ENCODE measurements at regions of chr5 and their contacts with region 1.

Region 1: DNA sequence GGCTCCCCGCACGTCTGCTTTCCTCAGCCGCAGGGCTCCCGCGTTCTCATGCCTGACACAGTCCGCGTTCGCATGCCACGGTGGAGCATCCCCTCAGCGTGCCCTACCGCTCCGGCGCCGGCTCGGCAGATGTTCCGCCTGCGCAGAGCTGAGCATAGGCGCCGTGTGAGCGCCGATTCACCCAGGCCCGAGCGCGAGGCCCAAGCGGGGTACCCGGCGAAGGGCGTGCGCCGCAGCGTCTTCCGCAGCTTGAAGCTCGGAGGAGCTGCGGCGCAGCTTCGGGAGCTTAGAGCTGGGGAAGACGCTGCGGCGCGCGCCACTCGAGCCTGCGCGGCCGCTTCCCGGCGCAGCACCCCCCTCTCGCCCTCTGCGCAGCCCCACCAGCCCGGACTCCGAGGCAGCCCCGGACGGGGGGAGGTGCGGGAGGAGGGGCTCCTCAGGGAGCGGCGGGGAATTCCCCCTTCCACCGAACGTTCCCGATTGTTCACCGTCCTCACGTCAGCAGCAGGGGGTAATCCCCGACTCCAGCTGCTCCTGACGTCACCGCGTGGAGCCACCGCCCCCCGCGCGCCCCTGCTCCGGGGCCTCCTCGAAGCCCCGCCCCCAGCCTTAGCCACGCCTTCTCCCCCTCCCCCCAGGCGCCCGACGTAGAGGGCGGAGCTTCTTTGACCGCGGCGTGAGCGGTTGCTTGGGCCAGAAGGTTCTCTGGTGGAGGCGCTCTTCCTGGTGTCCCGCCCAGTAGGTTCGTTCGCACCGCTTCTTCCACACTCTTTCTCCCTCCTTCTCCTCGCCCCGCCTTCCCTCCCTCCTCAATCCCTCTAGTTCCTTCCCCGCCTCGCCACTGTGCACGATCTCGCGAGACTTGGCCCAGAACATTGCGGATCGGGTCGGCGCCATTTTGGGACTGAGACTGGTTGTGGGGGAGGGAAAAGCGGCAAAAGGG is at the start of gene GPBP1:
- DNase-seq: peak; percentile 99 to 100
- H3K4me3 ChIP-seq: peak within 1 kb of the TSS; percentile 99
- CTCF ChIP-seq: no peak
- POLR2A ChIP-seq: peak in 1 of 2 donors; percentile 12
- total RNA-seq, gene GPBP1: 40.1 to 58.6 (median 52.7) TPM

Region 2: DNA sequence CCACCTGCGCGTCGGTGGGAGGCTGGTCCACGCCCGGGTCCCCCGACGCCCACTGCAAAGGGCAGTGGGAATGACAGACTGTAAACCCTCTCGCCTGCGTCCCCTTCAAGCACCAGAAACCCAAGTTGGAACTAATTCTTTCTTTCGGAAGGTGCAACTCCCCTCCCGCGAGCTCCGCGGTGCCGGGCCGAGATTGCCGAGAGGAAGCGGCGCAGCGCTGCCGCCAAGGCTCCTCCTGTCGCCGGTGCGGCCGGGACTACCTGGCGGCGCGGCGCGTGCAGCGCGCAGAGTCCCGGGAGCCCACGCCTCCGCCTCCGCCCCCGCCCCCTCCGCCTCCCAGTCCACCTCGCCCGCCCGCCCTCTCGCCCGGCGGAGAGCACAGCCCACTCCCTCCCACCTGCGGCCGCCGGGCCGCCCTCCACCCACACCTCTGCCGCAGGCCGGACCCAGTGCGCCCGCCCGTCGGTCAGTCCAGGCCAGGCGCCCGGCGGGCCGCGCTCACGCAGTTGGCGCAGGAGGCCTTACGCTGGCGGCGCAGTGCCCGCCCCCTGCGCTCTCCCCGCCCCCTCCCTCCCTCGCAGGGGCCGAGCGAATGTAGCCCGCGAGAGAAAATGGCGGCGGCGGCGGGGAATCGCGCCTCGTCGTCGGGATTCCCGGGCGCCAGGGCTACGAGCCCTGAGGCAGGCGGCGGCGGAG is 358.3 kb before region 1 on chr5 and contains the start of gene MAP3K1:
- intact Hi-C with region 1: loop called (anchors 10 kb)
- DNase-seq: peak; percentile 72 to 96
- H3K4me3 ChIP-seq: peak within 1 kb of the TSS; percentile 80
- CTCF ChIP-seq: no peak
- POLR2A ChIP-seq: no peak
- total RNA-seq, gene MAP3K1: 63.7 to 92.8 (median 68.9) TPM

Region 3: DNA sequence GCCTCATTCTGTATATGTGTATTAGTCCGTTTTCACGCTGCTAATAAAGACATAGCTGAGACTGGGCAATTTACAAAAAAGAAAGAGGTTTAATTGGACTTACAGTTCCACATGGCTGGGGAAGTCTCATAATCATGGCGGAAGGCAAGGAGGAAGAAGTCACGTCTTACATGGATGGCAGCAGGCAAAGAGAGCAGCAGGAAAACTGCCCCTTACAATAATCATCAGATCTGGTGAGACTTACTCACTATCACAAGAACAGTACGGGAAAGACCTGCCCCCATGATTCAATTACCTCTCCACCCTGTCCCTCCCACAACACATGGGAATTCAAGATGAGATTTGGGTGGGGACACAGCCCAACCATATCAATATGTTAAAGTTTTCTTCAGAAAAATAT is 49.4 kb before region 1 on chr5:
- intact Hi-C with region 1: no loop called
- DNase-seq: no peak
- H3K4me3 ChIP-seq: no peak overlapping the region
- CTCF ChIP-seq: no peak
- POLR2A ChIP-seq: no peak

Region 4: GRCh38 chr5:57137401-57137800 is 36.1 kb before region 1 on chr5:
- intact Hi-C with region 1: no loop called
- DNase-seq: no peak
- H3K4me3 ChIP-seq: no peak overlapping the region
- CTCF ChIP-seq: no peak
- POLR2A ChIP-seq: no peak

Region 5: DNA sequence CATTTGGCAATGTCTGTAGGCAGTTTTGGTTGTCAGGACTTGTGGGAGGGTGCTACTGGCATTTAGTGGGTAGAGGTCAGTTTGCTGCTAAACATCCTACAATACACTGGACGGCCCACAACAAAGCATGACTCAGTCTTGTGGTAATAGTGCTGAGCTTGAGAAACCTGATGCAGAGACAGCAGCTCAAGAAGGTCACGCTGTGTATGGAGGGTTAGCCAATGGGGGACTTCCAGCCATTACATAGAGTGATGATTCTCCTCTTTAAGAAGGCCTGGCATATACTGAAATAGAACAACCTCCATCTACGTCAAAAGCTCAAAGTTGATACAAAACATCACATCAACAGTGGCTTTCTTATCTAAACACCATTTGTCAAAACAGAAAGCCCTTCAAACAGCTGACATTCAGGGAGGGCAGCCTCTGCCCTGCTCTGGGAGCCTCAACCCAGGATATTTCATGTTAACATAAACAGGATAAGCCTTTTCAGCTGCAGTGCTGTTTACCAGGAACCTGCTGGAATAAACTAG is 143.4 kb after region 1 on chr5:
- intact Hi-C with region 1: no loop called
- DNase-seq: no peak
- H3K4me3 ChIP-seq: no peak overlapping the region
- CTCF ChIP-seq: no peak
- POLR2A ChIP-seq: no peak

Measured in lower leg skin (tissue), 4 donors.